ENCODE measurements at regions of chr16 and their contacts with region 1.

Region 1: DNA sequence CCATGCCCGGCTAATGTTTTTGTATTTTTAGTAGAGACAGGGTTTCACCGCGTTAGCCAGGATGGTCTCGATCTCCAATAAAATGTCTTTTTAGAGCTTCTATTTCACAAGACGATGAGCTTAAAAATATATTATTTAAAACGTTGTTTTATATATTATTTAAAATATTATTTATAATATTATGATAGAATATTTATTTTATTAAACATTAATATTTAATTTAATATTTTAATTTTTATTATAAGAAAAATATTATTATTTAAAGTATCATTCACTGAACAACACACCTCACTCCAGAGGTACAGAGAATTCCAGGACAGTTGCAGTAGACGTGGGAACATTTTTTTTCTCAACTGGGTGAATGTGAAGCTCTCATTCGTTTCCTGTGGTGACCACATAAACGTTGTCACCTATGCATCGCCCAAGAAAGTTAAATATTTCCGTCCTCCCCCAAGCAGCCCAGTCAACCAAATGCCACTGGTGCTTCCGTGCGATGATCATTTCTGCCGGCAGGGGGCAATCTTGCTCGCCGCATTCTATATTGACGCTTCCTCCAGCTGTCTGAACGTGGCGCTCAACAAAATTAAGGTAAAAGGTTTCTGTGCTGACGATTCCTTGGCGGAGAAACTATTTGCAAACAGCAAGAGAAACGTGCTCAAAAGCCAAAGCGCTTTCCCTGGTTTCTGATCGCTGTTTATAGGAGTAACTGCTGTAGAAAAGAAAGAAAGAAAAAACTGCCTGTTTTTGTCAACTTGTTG is 41.7 kb upstream of the PRSS54 start:
- DNase-seq: peak; percentile 86
- H3K4me3 ChIP-seq: no peak overlapping the region
- H3K27ac ChIP-seq: no peak overlapping the region
- H3K4me1 ChIP-seq: peaks cover 26% of the 10 kb centered on the region
- CTCF ChIP-seq: peak; percentile 99

Region 2: DNA sequence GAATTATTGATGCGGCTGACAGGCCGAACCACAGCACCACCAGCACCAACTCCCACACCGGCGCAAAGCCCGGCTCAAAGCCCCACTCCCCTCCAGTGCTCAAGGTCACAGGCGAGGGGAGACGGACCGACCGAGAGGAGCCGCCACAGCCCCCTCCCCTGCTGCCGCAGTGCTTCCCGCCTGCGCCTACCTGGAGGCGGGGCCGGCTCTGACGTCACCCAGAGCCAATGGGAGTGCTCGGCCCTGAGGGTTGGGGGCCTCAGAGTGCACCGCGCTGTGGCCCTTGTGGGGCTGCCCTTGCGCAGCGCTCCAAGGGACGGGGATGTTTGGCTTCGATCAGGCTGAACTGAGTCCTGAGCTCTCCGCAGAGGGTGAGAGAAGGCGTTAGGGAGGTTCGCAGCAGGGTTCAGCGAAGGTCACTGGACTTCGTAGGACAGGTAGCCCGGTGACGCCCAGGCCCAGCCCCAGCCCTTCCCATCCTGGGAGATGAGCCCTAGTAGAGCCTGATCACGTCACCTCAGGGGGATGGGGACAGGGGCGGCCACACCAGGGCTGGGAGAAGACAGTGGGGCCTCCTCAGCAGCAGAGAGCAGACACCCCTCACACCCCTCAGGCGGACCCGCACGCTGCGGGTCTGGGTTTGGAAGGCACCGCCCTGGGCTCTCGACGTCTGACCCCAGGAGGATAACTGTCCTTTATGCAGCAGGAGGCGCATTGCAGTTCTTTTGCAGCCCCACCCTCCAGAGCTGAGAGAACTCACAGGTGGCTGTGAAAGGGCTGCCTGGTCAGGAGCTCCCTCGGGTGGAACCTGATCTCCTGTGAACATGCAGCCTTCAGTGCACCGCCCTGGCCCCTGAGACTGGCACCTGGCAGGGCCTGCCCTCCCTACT is 165.0 kb after region 1 on chr16:
- CTCF ChIA-PET with region 1: interaction called, 3 read pairs
- POLR2A ChIA-PET with region 1: interaction called, 10 read pairs
- intact Hi-C with region 1: no loop called
- DNase-seq: peak; percentile 62
- H3K4me3 ChIP-seq: peak overlapping the region; percentile 65
- H3K27ac ChIP-seq: no peak overlapping the region
- H3K4me1 ChIP-seq: peaks cover 27% of the 10 kb centered on the region
- CTCF ChIP-seq: no peak

Measured in OCI-LY7 (cell line).